ENCODE measurements at regions of chr15 and their contacts with region 1.

Region 1: DNA sequence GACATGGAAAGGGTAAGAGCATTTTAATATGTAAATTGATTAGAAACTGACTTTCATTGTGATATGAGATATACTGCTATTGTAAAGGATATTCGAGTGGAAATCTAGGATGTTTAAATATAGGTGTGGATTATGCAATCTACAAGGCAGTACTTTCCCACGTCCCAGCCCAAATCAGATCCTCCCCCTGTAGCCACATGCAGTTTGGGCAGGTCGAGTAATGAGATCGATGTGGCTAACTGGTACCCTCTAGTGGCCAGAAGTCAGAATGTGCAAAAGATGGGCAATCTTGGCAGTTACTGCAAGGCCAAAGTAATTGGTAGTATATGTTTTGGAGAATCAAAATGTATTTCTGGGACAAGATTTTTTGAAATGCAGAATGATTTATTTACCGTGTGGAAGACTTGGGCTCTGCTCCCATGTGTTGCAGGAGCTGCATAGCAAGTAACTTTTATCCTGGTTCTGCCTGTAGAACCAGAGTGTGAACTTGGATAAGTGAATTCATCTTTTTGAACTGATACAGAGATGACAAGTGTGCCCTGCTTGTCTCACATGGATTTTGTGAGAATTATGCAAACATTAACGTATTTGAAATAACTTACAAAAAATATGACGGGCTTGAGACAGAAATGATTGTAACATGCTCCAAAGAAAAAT is 94.5 kb upstream of the ADAMTSL3 start:
- DNase-seq: peak; percentile 20
- ATAC-seq: peak; percentile 88
- H3K4me3 ChIP-seq: no peak overlapping the region
- H3K27ac ChIP-seq: no peak overlapping the region
- H3K4me1 ChIP-seq: no peaks in the 10 kb centered on the region
- H3K27me3 ChIP-seq: no peaks in the 10 kb centered on the region
- CTCF ChIP-seq: peak; percentile 78 to 89 (median 85)
- EP300 ChIP-seq: no peak
- POLR2A ChIP-seq: no peak
- RAD21 ChIP-seq: peak; percentile 80

Region 2: DNA sequence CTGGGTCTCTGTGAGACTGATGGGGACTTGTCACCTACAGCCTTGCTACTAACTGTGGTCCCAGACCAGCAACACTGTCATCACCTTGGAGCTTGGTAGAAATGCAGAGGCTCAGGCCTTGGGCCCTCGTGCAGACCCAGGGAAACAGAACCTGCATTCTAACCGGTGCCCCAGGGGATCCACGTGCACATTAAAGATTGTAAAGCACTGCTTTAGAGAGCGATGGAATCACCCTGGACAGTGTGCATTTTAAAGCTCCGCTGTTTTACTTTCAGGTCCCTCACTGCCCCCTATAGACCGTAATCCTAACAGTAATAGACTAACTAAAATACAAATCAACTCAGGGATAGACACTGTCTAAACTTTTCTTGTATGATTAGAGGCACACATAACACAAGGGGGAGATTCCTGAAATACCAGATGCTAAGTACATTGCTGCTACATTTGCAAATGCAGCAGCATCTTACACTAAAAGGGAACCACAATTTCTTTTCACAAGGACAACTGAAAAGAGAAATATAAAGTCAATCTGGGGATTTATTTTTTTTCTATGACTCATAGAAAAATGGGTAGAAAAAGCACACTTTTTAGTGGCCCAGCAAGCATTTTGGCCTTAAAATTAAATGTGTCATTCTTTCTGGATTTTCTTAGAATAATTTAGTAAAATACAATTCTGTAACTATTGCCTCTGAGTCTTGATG is 122.8 kb before region 1 on chr15:
- CTCF ChIA-PET with region 1: interaction called, 25 read pairs
- POLR2A ChIA-PET with region 1: no interaction called
- RAD21 ChIA-PET with region 1: no interaction called
- SMC1A ChIA-PET with region 1: interaction called, 9 read pairs
- in situ Hi-C with region 1: loop called (anchors 5 kb)
- intact Hi-C with region 1: loop called (anchors 1 kb)
- DNase-seq: no peak
- ATAC-seq: peak; percentile 70
- H3K4me3 ChIP-seq: no peak overlapping the region
- H3K27ac ChIP-seq: no peak overlapping the region
- H3K4me1 ChIP-seq: no peaks in the 10 kb centered on the region
- H3K27me3 ChIP-seq: peaks cover 0 to 2% of the 10 kb centered on the region in 2 experiments; a peak in 1 of 4 replicates
- CTCF ChIP-seq: peak in 2 of 3 experiments; percentile 16 to 32; a peak in 1 of 6 replicates
- EP300 ChIP-seq: no peak
- POLR2A ChIP-seq: no peak
- RAD21 ChIP-seq: no peak

Measured in GM12878 (cell line).